ENCODE measurements at regions of chr12 and their contacts with region 1.

Region 1: DNA sequence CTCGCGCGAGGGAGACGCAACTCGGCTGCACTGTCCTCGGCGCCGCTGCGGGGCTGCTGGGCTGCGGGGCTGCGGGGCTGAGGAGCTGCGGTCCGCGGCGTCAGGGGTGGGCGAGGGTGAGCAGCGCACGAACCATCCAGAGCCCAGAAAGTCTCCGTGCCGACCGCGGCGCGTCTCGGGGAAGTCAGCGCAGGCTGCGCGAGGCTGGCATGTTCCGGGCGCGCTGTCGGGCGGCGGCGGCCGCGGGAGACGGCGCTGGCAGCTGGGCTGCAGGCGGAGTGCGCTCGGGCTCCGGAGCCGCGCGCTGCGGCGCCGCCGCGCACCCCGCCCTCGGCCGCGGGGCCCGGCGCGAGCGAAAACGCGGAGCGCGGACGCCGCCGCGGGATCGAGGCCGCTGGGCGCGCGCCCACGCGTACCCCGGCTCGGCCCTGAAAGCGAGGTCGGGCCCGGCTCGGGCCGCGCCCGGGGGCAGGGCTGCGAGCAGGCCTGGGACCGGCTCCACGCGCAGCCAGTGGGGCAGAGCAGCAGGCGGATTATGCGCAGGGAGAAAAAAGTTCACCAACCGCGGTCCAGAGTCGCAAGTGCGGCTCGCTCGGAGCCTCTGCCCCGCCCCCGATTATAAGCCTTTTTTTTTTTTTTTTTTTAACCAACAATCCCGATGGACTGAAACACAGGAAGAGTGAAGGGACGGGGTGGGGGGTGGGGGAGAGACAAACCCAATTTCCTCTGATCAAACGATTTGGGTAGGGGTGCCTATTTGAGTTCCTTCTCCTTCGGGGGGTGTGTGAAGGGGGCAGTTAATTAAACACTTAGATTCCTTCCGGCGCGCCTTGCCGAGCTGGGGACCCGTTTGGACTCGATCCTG is at the start of gene PRICKLE1:
- DNase-seq: peak; percentile 54
- H3K4me3 Mint-ChIP-seq: peak within 1 kb of the TSS; percentile 81
- H3K27ac Mint-ChIP-seq: peak within 1 kb of the TSS; percentile 76
- H3K4me1 Mint-ChIP-seq: peaks cover 30% of the 10 kb centered on the region
- H3K27me3 Mint-ChIP-seq: no peaks in the 10 kb centered on the region
- CTCF ChIP-seq: no peak
- total RNA-seq, gene PRICKLE1: 7.9 and 14.1 TPM in 2 replicates

Region 2: GRCh38 chr12:42568952-42569915 is 20.5 kb before region 1 on chr12:
- CTCF ChIA-PET with region 1: interaction called, 46 read pairs
- POLR2A ChIA-PET with region 1: interaction called, 4 read pairs
- intact Hi-C with region 1: no loop called
- DNase-seq: peak; percentile 58
- H3K4me3 Mint-ChIP-seq: no peak overlapping the region
- H3K27ac Mint-ChIP-seq: no peak overlapping the region
- H3K4me1 Mint-ChIP-seq: peaks cover 6% of the 10 kb centered on the region
- H3K27me3 Mint-ChIP-seq: no peaks in the 10 kb centered on the region
- CTCF ChIP-seq: peak; percentile 57

Region 3: DNA sequence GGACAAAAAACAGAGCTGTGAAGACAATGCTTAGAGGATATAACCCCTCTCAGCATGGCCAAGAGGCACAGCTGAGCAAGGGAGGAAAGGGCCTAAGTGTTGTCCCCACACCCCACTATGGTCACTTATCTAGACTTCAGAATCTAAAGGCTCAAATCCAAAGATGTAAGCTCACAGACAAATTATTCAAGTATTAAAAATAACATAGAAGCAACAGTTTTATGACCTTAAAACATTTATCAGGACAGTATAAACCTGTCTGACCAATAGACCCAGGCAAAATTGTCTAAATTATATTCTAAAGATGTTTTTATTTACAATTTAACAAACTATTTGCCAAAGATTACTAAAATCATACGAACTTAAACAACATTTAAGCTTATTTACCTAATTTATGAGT is 27.9 kb after region 1 on chr12:
- CTCF ChIA-PET with region 1: no interaction called
- POLR2A ChIA-PET with region 1: no interaction called
- intact Hi-C with region 1: no loop called
- DNase-seq: peak; percentile 11
- H3K4me3 Mint-ChIP-seq: no peak overlapping the region
- H3K27ac Mint-ChIP-seq: no peak overlapping the region
- H3K4me1 Mint-ChIP-seq: no peaks in the 10 kb centered on the region
- H3K27me3 Mint-ChIP-seq: no peaks in the 10 kb centered on the region
- CTCF ChIP-seq: no peak

Region 4: GRCh38 chr12:42779186-42779859 is 189.6 kb after region 1 on chr12:
- CTCF ChIA-PET with region 1: no interaction called
- POLR2A ChIA-PET with region 1: interaction called, 3 read pairs
- intact Hi-C with region 1: loop called (anchors 10 kb)
- DNase-seq: peak; percentile 79
- H3K4me3 Mint-ChIP-seq: peak overlapping the region; percentile 39
- H3K27ac Mint-ChIP-seq: peak overlapping the region; percentile 81
- H3K4me1 Mint-ChIP-seq: peaks cover 23% of the 10 kb centered on the region
- H3K27me3 Mint-ChIP-seq: no peaks in the 10 kb centered on the region
- CTCF ChIP-seq: no peak

Region 5: DNA sequence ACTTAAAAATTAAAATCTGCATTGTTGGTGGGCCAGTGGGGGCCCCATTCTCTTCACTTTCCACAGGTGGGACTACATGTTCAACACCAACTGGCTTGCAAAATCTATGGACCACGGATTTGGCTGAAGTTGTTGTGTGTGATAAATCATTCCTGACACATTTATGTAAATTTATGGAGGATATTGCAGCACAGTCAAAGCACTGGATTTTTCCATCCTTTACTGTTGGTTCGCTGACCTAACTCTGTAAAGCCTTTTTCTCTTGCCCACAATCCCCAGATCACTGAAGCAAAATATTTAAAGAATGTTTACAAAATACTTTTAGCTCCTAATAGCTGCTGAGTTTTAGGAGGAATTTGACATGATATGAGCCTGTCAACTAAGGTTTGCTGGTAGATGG is 219.5 kb after region 1 on chr12:
- CTCF ChIA-PET with region 1: no interaction called
- POLR2A ChIA-PET with region 1: interaction called, 3 read pairs
- intact Hi-C with region 1: loop called (anchors 10 kb)
- DNase-seq: peak; percentile 12
- H3K4me3 Mint-ChIP-seq: no peak overlapping the region
- H3K27ac Mint-ChIP-seq: no peak overlapping the region
- H3K4me1 Mint-ChIP-seq: peaks cover 5% of the 10 kb centered on the region
- H3K27me3 Mint-ChIP-seq: no peaks in the 10 kb centered on the region
- CTCF ChIP-seq: no peak

Region 6: DNA sequence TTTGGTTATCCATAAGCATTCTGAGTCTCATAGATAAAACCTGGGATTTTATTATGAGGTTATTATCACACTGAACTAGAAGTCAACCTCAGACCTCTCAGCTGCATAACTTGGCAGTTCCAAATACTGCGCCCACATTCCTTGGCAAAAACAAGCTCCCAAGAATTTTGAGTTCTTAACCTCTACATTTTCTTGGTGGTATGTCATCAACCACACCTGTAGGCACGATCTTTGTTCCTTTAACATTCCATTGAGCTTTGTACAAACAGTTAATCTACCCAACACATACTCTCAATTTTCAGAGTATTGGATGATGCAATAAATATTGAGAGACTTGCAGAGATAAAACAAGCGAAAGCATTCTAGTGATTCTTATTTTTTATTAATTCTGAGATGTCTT is 371.7 kb after region 1 on chr12:
- CTCF ChIA-PET with region 1: interaction called, 6 read pairs
- POLR2A ChIA-PET with region 1: interaction called, 6 read pairs
- intact Hi-C with region 1: loop called (anchors 2 kb)
- DNase-seq: peak; percentile 91
- H3K4me3 Mint-ChIP-seq: no peak overlapping the region
- H3K27ac Mint-ChIP-seq: peak overlapping the region; percentile 71
- H3K4me1 Mint-ChIP-seq: peaks cover 50% of the 10 kb centered on the region
- H3K27me3 Mint-ChIP-seq: no peaks in the 10 kb centered on the region
- CTCF ChIP-seq: no peak

Measured in MCF 10A (cell line).